Activated CD4-positive, alpha-beta memory T cell treated with anti-CD3 and anti-CD28 coated beads for 36 hours (primary cell): ENCODE measurements at regions of chr2 and their contacts with region 1.

Region 1: GRCh38 chr2:159118115-159118858 is 149.8 kb downstream of the TANC1 start:
- DNase-seq: peak; percentile 84
- H3K4me3 Mint-ChIP-seq: no peak overlapping the region
- H3K27ac Mint-ChIP-seq: no peak overlapping the region
- H3K4me1 Mint-ChIP-seq: no peaks in the 10 kb centered on the region
- H3K27me3 Mint-ChIP-seq: peaks cover 2% of the 10 kb centered on the region

Region 2: GRCh38 chr2:158903711-158904443 is 214.4 kb before region 1 on chr2:
- CTCF ChIA-PET with region 1: interaction called, 112 read pairs
- POLR2A ChIA-PET with region 1: no interaction called
- intact Hi-C with region 1: loop called (anchors 1 kb)
- DNase-seq: no peak
- H3K4me3 Mint-ChIP-seq: no peak overlapping the region
- H3K27ac Mint-ChIP-seq: no peak overlapping the region
- H3K4me1 Mint-ChIP-seq: no peaks in the 10 kb centered on the region
- H3K27me3 Mint-ChIP-seq: no peaks in the 10 kb centered on the region

Region 3: DNA sequence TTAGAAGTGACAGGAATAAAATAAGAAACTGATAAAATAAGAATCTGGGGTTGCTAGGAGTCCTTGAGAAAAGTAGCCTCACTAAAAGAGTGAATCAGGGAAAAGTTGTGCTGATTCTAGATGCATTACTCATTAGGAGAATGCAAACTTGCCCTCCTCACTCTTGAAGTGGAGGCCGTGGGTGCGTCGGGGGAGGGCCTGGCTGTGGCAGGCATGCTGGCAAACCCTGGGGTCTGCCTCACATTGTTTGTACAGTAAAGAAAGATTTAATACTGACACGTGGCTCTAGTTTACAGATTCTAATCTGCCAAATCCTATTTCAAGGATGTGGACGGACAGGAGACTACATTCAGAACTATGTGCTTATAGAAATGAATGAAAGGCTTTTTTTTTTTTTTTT is 107.9 kb before region 1 on chr2:
- CTCF ChIA-PET with region 1: no interaction called
- POLR2A ChIA-PET with region 1: no interaction called
- intact Hi-C with region 1: no loop called
- DNase-seq: peak; percentile 25
- H3K4me3 Mint-ChIP-seq: no peak overlapping the region
- H3K27ac Mint-ChIP-seq: no peak overlapping the region
- H3K4me1 Mint-ChIP-seq: peaks cover 7% of the 10 kb centered on the region
- H3K27me3 Mint-ChIP-seq: peaks cover 5% of the 10 kb centered on the region

Region 4: DNA sequence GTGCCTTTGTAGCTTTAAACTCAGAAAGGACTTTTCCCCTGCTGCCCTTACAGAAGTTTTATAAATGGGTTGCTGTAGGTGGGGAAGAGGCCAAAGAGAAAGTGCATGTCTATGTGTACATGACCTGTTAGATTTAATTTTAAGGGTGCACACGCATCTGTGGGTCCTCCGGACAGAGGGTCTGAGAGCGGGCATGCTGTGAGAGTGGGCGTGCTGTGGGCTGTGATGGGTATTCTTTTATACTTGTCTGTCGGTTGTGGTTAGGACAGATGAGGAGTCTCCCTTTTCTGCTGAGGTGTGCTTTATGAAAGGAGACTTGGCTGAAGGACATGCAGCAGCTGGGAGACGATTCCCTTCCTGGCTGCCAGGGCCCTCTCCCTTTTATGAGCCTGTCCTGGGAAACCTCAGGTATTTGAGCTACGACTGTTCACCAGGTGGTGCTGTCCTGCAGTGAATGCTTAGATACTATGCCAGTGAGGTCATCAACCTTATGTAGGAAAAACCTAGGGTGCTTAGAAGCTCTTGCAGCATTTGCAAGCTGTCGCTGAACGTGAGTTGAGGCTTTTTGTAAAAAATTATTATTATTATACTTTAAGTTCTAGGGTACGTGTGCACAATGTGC is 82.4 kb before region 1 on chr2:
- CTCF ChIA-PET with region 1: interaction called, 5 read pairs
- POLR2A ChIA-PET with region 1: no interaction called
- intact Hi-C with region 1: loop called (anchors 5 kb)
- DNase-seq: peak; percentile 11
- H3K4me3 Mint-ChIP-seq: no peak overlapping the region
- H3K27ac Mint-ChIP-seq: no peak overlapping the region
- H3K4me1 Mint-ChIP-seq: no peaks in the 10 kb centered on the region
- H3K27me3 Mint-ChIP-seq: peaks cover 3% of the 10 kb centered on the region

Region 5: GRCh38 chr2:159129824-159130223 is 11.5 kb after region 1 on chr2:
- CTCF ChIA-PET with region 1: interaction called, 12 read pairs
- POLR2A ChIA-PET with region 1: no interaction called
- intact Hi-C with region 1: no loop called
- DNase-seq: no peak
- H3K4me3 Mint-ChIP-seq: no peak overlapping the region
- H3K27ac Mint-ChIP-seq: no peak overlapping the region
- H3K4me1 Mint-ChIP-seq: no peaks in the 10 kb centered on the region
- H3K27me3 Mint-ChIP-seq: no peaks in the 10 kb centered on the region